Mammary epithelial cell (primary cell): ENCODE measurements at regions of chr17 and their contacts with region 1.

Region 1: GRCh38 chr17:18314731-18315561 is at the starts of genes SMCR8 and TOP3A:
- DNase-seq: peak; percentile 99
- H3K4me3 ChIP-seq: peak within 1 kb of the TSS; percentile 50 to 93 (median 91)
- H3K27ac ChIP-seq: peak within 1 kb of the TSS; percentile 58
- H3K4me1 ChIP-seq: peaks cover 38% of the 10 kb centered on the region
- H3K27me3 ChIP-seq: no peaks in the 10 kb centered on the region
- CTCF ChIP-seq: no peak
- total RNA-seq, gene SMCR8: 15.2 to 21.5 TPM
- total RNA-seq, gene TOP3A: 27.2 to 36.4 TPM

Region 2: DNA sequence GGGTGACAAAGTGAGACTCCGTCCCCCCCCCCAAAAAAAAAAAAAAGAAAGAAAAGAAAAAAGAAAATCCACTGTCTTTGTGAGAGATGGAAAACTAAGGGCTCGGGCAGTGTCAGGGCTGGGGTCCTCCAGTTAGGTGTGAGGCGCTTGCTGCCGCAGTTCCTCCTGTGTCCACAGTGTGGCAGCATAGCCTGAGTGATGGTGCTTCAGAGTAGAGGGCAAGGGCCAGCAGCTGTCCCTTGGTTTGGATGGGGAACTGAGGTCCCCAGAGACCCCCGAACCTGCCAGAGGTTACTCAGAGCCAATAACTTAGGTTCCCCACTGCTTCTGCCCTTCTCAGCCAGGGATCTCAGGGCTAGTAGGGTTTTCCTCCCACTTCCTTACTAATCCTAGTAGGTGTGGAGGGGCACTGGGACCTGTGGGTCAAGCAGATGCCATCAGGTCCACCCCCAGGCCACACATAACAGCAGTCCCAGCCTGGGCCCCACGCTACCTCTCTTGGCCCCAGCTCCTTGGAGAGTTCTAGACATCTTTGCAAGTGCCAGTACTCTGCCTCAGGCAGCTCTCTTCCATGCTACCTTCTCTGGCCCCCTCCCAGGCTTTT is 97.4 kb before region 1 on chr17:
- CTCF ChIA-PET with region 1: no interaction called
- dilution Hi-C with region 1: loop called (anchors 5 kb)
- in situ Hi-C with region 1: no loop called
- intact Hi-C with region 1: loop called (anchors 2 kb)
- DNase-seq: peak; percentile 34
- H3K4me3 ChIP-seq: no peak overlapping the region
- H3K27ac ChIP-seq: no peak overlapping the region
- H3K4me1 ChIP-seq: no peaks in the 10 kb centered on the region
- H3K27me3 ChIP-seq: no peaks in the 10 kb centered on the region
- CTCF ChIP-seq: peak; percentile 96 to 98

Region 3: GRCh38 chr17:18248300-18248731 is 66.6 kb before region 1 on chr17:
- CTCF ChIA-PET with region 1: no interaction called
- dilution Hi-C with region 1: loop called (anchors 5 kb)
- in situ Hi-C with region 1: no loop called
- intact Hi-C with region 1: loop called (anchors 2 kb)
- DNase-seq: peak; percentile 55
- H3K4me3 ChIP-seq: no peak overlapping the region
- H3K27ac ChIP-seq: no peak overlapping the region
- H3K4me1 ChIP-seq: peaks cover 17% of the 10 kb centered on the region
- H3K27me3 ChIP-seq: no peaks in the 10 kb centered on the region
- CTCF ChIP-seq: peak; percentile 72 to 73

Region 4: DNA sequence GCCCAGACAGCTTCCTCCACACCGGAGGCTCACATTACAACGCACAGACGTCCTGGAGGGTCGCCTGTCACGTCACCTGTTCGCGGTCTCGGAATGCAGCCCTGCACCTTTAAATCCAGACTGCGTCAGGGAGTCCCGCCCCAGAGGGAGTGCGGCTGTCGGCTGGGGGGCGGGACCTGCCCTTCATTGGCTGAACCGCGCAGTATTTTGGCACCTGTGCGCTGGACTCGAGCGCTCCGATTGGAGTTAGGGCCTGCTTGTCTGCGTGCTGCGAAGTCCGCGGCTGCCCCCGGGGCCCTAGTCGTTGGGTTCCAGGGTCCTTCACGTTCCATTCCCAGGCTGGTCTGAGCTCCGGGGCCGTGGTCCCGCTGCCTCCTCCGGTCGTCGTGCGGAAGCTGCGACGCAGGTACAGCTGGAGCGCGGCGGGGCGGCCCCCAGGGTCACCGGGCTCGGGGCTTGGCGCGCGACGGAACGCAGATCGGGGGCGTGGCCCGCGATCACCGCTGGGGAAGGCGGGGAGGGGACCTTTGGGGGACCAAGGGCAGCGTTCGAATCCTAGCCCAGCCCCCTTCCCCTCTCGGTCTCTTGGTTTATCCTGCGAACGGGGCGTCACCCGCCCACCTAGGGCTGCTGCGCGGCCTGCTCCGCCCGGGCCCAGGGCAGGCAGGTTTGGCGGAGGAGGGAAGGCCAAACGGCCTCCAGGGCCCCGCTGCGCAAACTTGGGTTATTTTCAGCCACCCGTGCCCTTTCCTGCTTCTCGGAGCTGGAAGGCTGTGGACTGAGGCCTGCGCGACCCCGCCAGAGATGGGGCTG is 54.4 kb before region 1 on chr17 and contains the start of gene MIEF2:
- CTCF ChIA-PET with region 1: no interaction called
- dilution Hi-C with region 1: no loop called
- in situ Hi-C with region 1: no loop called
- intact Hi-C with region 1: loop called (anchors 1 kb)
- DNase-seq: peak; percentile 93
- H3K4me3 ChIP-seq: peak within 1 kb of the TSS; percentile 91 to 95 (median 93)
- H3K27ac ChIP-seq: peak within 1 kb of the TSS; percentile 92
- H3K4me1 ChIP-seq: peaks cover 43% of the 10 kb centered on the region
- H3K27me3 ChIP-seq: no peaks in the 10 kb centered on the region
- CTCF ChIP-seq: no peak
- total RNA-seq, gene MIEF2: 11.9 to 56.3 TPM

Region 5: DNA sequence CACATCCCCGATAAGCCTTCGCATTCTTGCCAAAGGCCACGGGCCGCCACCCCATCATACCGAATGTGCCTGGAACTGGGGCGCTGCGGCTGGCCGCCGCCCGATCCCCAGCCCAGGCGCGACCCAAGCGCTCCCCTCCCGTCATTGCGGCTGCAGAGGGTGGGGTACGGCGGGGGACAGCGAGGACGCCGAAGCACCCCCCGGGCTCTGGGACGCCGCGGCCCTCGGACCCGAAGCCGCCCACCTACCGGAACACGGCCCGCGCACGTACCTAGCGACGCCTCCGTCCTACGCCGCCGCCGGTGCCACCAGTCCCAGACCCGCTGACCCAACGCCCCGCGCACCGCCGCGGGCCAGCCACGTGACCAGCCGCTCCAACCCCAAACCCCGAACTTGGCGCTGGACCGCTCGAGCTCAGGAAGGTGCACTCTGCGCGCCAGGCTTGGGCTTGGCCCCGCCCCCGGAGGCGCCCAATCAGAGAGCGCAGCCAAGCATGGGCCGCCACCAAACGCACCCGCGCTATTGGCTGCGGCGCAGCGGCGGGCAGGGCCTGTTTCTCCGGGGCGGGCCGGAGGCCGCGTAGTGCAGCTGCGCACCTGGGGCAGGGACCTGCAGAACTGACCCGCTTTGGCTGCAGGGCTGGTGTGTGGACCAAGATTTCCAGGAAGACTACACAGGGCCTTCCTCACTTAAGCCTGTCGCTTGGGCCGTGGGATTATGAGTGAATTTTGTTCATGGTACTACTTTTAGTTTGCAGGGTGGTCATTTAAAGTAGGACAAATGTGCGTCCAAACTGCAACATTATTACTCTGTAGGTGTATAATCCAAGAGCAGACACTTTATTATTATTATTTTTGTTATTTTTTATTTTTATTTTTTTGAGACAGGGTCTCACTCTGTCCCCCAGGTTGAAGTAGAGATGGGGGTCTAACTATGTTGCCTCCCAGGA is 48.4 kb after region 1 on chr17 and contains the start of gene SHMT1:
- CTCF ChIA-PET with region 1: no interaction called
- dilution Hi-C with region 1: no loop called
- in situ Hi-C with region 1: no loop called
- intact Hi-C with region 1: loop called (anchors 2 kb)
- DNase-seq: peak; percentile 92
- H3K4me3 ChIP-seq: peak within 1 kb of the TSS; percentile 60 to 86 (median 72)
- H3K27ac ChIP-seq: peak within 1 kb of the TSS; percentile 50
- H3K4me1 ChIP-seq: peaks cover 10% of the 10 kb centered on the region
- H3K27me3 ChIP-seq: no peaks in the 10 kb centered on the region
- CTCF ChIP-seq: no peak
- total RNA-seq, gene SHMT1: 25.3 to 25.6 TPM

Region 6: GRCh38 chr17:18377437-18378204 is 62.7 kb after region 1 on chr17 and contains the start of gene EVPLL:
- CTCF ChIA-PET with region 1: no interaction called
- dilution Hi-C with region 1: no loop called
- in situ Hi-C with region 1: no loop called
- intact Hi-C with region 1: no loop called
- DNase-seq: peak; percentile 94
- H3K4me3 ChIP-seq: peak within 1 kb of the TSS in 1 of 3 experiments; percentile 20
- H3K27ac ChIP-seq: no peak within 1 kb of the TSS
- H3K4me1 ChIP-seq: peaks cover 11% of the 10 kb centered on the region
- H3K27me3 ChIP-seq: peaks cover 3% of the 10 kb centered on the region
- CTCF ChIP-seq: no peak
- total RNA-seq, gene EVPLL: 0.17 TPM in 1 of 2 donors, not detected in the other